Activated CD4-positive, alpha-beta T cell treated with anti-CD3 and anti-CD28 coated beads for 36 hours (primary cell): ENCODE measurements at regions of chr12 and their contacts with region 1.

Region 1: DNA sequence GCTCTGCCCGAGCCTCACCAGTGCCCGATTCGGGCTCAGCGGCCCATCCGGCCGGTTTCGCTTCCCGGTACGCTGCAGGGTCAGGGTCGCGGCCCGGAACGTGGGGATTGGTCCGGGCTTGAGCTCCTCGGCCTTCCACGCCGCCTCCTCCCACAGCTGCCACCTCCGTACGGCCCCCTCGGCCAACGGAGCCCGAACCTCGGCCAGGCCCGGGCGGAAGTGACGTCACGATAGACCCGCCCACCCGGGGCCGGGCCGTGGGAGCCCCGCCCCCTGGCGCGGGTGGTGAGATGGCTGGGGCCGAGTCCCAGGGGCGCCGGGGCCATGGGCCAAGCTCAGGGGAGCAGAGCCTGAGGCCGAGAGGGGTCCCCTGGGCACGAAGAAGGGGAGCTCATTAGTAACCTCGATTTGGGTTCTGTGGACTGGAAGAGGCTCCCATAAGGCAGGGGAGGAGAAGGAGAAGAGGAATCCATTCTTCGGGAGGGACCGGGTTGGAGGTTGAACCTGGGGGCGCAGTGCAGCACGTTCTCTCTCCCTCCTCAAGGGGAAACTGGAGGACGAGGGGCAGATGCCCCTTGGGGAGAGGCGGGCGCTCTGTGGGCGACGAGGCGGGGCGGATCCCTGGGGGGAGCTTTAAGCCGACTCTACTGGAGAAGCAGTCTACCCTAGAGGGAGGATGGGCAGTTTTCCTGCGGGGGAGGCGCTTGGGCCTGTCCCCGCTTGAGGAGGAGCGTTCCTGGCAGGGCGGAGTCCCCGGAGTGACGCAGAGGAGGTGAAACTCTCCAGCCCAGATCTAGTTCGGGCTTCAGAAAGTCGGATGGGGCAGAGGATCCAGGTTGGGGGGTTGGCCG is at the start of gene MLF2:
- DNase-seq: peak; percentile 99
- ATAC-seq: peak; percentile 96
- H3K4me3 Mint-ChIP-seq: peak within 1 kb of the TSS; percentile 87
- H3K27ac Mint-ChIP-seq: peak within 1 kb of the TSS; percentile 97
- H3K4me1 Mint-ChIP-seq: peaks cover 26% of the 10 kb centered on the region
- H3K27me3 Mint-ChIP-seq: no peaks in the 10 kb centered on the region
- total RNA-seq, gene MLF2: 142 to 144 TPM

Region 2: GRCh38 chr12:6563448-6564050 is 189.6 kb before region 1 on chr12:
- CTCF ChIA-PET with region 1: no interaction called
- POLR2A ChIA-PET with region 1: no interaction called
- intact Hi-C with region 1: no loop called
- DNase-seq: peak; percentile 82
- ATAC-seq: peak; percentile 37
- H3K4me3 Mint-ChIP-seq: no peak overlapping the region
- H3K27ac Mint-ChIP-seq: peak overlapping the region; percentile 17
- H3K4me1 Mint-ChIP-seq: peaks cover 40% of the 10 kb centered on the region
- H3K27me3 Mint-ChIP-seq: no peaks in the 10 kb centered on the region

Region 3: DNA sequence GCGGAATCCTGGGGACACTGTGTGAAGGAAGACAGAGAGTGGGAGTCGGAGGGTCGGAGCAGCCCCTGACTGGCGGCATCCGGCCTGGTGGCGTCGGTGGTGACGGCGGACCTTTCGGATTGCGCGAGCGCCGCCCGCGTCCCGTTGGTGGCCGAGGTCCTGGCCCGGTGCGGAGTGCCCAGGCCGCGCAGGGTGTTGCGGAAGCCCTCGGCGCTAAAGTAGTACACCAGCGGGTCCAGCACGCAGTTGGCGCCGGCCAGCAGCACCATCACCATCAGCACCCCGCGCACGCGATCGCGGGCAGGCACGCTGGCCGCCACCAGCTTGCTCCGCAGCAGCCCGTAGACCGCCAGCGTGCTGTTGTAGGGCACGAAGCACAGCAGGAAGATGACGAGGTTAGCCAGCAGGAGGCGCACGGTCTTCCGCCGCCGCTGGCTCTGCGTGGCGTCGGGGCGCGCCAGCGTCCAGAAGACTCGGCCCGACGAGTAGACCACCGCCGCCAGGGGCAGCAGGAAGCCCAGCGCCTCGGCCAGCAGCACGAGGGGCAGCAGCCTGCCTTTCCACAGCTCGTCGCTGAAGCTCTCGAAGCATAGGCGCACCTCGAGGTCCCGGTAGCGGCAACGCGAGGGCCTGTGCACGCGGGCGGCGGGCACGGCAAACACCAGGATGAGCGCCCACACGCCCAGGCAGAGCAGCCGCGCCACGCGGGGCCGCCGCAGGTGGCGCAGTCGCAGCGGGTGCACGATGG is 132.8 kb before region 1 on chr12:
- CTCF ChIA-PET with region 1: no interaction called
- POLR2A ChIA-PET with region 1: no interaction called
- intact Hi-C with region 1: no loop called
- DNase-seq: peak; percentile 82
- ATAC-seq: peak; percentile 82
- H3K4me3 Mint-ChIP-seq: peak overlapping the region; percentile 67
- H3K27ac Mint-ChIP-seq: peak overlapping the region; percentile 73
- H3K4me1 Mint-ChIP-seq: peaks cover 8% of the 10 kb centered on the region
- H3K27me3 Mint-ChIP-seq: no peaks in the 10 kb centered on the region

Region 4: GRCh38 chr12:6723607-6724396 is 29.3 kb before region 1 on chr12 and contains the start of gene COPS7A:
- CTCF ChIA-PET with region 1: interaction called, 10 read pairs
- POLR2A ChIA-PET with region 1: interaction called, 12 read pairs
- intact Hi-C with region 1: loop called in 1 of 2 experiments (anchors 1 kb)
- DNase-seq: peak; percentile 98
- ATAC-seq: peak; percentile 96
- H3K4me3 Mint-ChIP-seq: peak within 1 kb of the TSS; percentile 80
- H3K27ac Mint-ChIP-seq: peak within 1 kb of the TSS; percentile 97
- H3K4me1 Mint-ChIP-seq: peaks cover 18% of the 10 kb centered on the region
- H3K27me3 Mint-ChIP-seq: no peaks in the 10 kb centered on the region
- total RNA-seq, gene COPS7A: 38.3 to 41.6 TPM

Region 5: DNA sequence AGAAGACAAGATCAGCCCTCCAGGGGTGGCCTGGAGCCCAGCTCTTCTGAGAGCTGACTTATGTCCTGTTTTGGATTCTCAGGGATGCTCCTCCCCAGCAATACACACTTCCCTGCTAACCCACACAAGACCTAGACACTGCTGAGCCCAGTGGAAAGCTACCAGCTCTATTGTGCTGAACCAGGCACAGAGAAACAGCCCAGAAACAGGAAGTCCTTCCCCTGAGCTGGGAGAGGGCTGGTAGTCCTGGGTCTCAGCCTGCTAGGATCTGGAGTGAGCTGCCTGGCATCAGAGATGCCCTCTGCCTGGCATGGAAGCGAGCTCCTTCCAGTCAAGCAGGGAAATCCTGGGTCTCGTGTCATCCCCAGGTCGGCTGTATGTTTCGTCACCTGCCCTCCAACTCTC is 17.9 kb after region 1 on chr12:
- CTCF ChIA-PET with region 1: interaction called, 29 read pairs
- POLR2A ChIA-PET with region 1: interaction called, 4 read pairs
- intact Hi-C with region 1: loop called in 1 of 2 experiments (anchors 1 kb)
- DNase-seq: peak; percentile 36
- ATAC-seq: peak; percentile 18
- H3K4me3 Mint-ChIP-seq: no peak overlapping the region
- H3K27ac Mint-ChIP-seq: peak overlapping the region; percentile 89
- H3K4me1 Mint-ChIP-seq: peaks cover 68% of the 10 kb centered on the region
- H3K27me3 Mint-ChIP-seq: peaks cover 18% of the 10 kb centered on the region

Region 6: GRCh38 chr12:6810758-6811157 is 57.6 kb after region 1 on chr12:
- CTCF ChIA-PET with region 1: interaction called, 12 read pairs
- POLR2A ChIA-PET with region 1: interaction called, 3 read pairs
- intact Hi-C with region 1: no loop called
- DNase-seq: no peak
- ATAC-seq: peak; percentile 34
- H3K4me3 Mint-ChIP-seq: no peak overlapping the region
- H3K27ac Mint-ChIP-seq: peak overlapping the region; percentile 74
- H3K4me1 Mint-ChIP-seq: peaks cover 21% of the 10 kb centered on the region
- H3K27me3 Mint-ChIP-seq: no peaks in the 10 kb centered on the region

Region 7: GRCh38 chr12:6867413-6868210 is 114.5 kb after region 1 on chr12 and contains the start of gene TPI1:
- CTCF ChIA-PET with region 1: interaction called, 10 read pairs
- POLR2A ChIA-PET with region 1: no interaction called
- intact Hi-C with region 1: no loop called
- DNase-seq: peak; percentile 91
- ATAC-seq: peak; percentile 68
- H3K4me3 Mint-ChIP-seq: peak within 1 kb of the TSS; percentile 93
- H3K27ac Mint-ChIP-seq: peak within 1 kb of the TSS; percentile 95
- H3K4me1 Mint-ChIP-seq: peaks cover 47% of the 10 kb centered on the region
- H3K27me3 Mint-ChIP-seq: no peaks in the 10 kb centered on the region
- total RNA-seq, gene TPI1: 1,824 to 2,753 TPM